Activated CD4-positive, alpha-beta memory T cell treated with anti-CD3 and anti-CD28 coated beads for 36 hours (primary cell): ENCODE measurements at regions of chr9 and their contacts with region 1.

Region 1: GRCh38 chr9:94870793-94871558 is 144.5 kb downstream of the AOPEP start:
- DNase-seq: peak; percentile 63
- H3K4me3 Mint-ChIP-seq: peak overlapping the region; percentile 30
- H3K27ac Mint-ChIP-seq: peak overlapping the region; percentile 80
- H3K4me1 Mint-ChIP-seq: peaks cover 51% of the 10 kb centered on the region
- H3K27me3 Mint-ChIP-seq: peaks cover 7% of the 10 kb centered on the region

Region 2: GRCh38 chr9:94802793-94803192 is 68.2 kb before region 1 on chr9:
- CTCF ChIA-PET with region 1: interaction called, 4 read pairs
- POLR2A ChIA-PET with region 1: no interaction called
- intact Hi-C with region 1: loop called (anchors 2 kb)
- DNase-seq: peak; percentile 61
- H3K4me3 Mint-ChIP-seq: no peak overlapping the region
- H3K27ac Mint-ChIP-seq: no peak overlapping the region
- H3K4me1 Mint-ChIP-seq: peaks cover 18% of the 10 kb centered on the region
- H3K27me3 Mint-ChIP-seq: no peaks in the 10 kb centered on the region

Region 3: DNA sequence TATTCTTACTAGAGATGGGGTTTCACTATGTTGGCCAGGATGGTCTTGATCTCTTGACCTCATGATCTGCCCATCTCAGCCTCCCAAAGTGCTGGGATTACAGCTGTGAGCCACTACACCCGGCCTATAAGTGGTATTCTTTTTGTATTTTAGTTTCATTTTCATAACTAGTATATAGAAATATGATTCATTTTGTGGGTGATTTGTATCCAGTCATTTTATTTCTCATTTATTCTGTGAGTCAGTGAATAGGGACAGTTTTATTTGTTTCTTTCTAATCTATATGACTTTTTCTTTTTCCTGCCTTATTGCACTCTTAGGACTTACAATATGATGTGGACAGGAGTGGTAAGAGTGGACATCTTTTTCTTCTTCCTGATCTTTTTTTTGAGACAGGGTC is 31.6 kb before region 1 on chr9:
- CTCF ChIA-PET with region 1: no interaction called
- POLR2A ChIA-PET with region 1: interaction called, 4 read pairs
- intact Hi-C with region 1: loop called (anchors 2 kb)
- DNase-seq: peak; percentile 26
- H3K4me3 Mint-ChIP-seq: no peak overlapping the region
- H3K27ac Mint-ChIP-seq: peak overlapping the region; percentile 53
- H3K4me1 Mint-ChIP-seq: peaks cover 18% of the 10 kb centered on the region
- H3K27me3 Mint-ChIP-seq: no peaks in the 10 kb centered on the region

Region 4: GRCh38 chr9:94900222-94901018 is 29.4 kb after region 1 on chr9:
- CTCF ChIA-PET with region 1: no interaction called
- POLR2A ChIA-PET with region 1: interaction called, 3 read pairs
- intact Hi-C with region 1: loop called (anchors 1 kb)
- DNase-seq: no peak
- H3K4me3 Mint-ChIP-seq: no peak overlapping the region
- H3K27ac Mint-ChIP-seq: peak overlapping the region; percentile 76
- H3K4me1 Mint-ChIP-seq: peaks cover 23% of the 10 kb centered on the region
- H3K27me3 Mint-ChIP-seq: no peaks in the 10 kb centered on the region

Region 5: DNA sequence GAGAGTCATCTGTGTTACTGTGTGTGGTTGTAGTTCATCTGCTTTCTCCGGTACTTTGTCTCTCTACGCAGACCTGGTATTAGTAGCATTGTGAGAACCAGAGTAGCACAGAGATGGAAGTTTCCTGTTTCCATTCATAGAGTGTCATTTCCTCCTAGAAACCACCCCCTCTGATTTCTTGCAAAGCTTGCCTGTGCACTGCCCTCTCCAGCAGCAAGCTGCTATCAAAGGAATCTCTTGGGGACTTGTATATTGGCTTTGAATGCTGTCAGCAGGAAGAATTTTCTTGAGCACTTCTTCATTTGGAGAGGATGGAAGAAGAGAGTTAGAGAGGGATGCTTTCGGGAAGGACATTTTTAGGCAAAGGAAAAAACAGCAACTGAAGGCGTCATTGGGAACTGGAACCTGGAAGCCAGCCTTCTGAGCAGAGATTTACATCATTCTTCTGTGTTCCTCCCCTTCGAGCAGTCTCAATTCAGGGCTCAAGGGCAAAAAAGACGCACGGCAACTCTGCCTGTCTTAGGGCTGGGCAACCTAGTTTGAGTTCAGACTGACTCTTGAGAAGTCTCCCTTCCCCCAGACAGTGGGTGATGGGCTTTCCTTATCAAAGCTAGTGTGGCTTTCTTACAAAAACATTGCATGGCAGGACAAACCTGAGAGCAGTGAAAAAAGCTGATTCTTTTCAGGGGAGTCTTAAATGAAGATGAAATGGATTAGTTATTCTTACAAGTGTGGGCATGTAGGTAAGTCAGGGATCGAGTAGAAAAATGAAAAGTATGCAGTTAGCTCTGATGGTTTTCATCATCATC is 81.8 kb after region 1 on chr9:
- CTCF ChIA-PET with region 1: no interaction called
- POLR2A ChIA-PET with region 1: no interaction called
- intact Hi-C with region 1: loop called (anchors 5 kb)
- DNase-seq: peak; percentile 28
- H3K4me3 Mint-ChIP-seq: no peak overlapping the region
- H3K27ac Mint-ChIP-seq: no peak overlapping the region
- H3K4me1 Mint-ChIP-seq: peaks cover 36% of the 10 kb centered on the region
- H3K27me3 Mint-ChIP-seq: no peaks in the 10 kb centered on the region

Region 6: GRCh38 chr9:95005278-95006203 is 134.6 kb after region 1 on chr9:
- CTCF ChIA-PET with region 1: no interaction called
- POLR2A ChIA-PET with region 1: no interaction called
- intact Hi-C with region 1: loop called (anchors 2 kb)
- DNase-seq: no peak
- H3K4me3 Mint-ChIP-seq: peak overlapping the region; percentile 77
- H3K27ac Mint-ChIP-seq: no peak overlapping the region
- H3K4me1 Mint-ChIP-seq: peaks cover 28% of the 10 kb centered on the region
- H3K27me3 Mint-ChIP-seq: peaks cover 22% of the 10 kb centered on the region

Region 7: GRCh38 chr9:95175523-95175922 is 304.5 kb after region 1 on chr9:
- CTCF ChIA-PET with region 1: no interaction called
- POLR2A ChIA-PET with region 1: no interaction called
- intact Hi-C with region 1: no loop called
- DNase-seq: no peak
- H3K4me3 Mint-ChIP-seq: no peak overlapping the region
- H3K27ac Mint-ChIP-seq: no peak overlapping the region
- H3K4me1 Mint-ChIP-seq: peaks cover 11% of the 10 kb centered on the region
- H3K27me3 Mint-ChIP-seq: no peaks in the 10 kb centered on the region